CD4-positive, alpha-beta memory T cell (primary cell): ENCODE measurements at regions of chr2 and their contacts with region 1.

Region 1: DNA sequence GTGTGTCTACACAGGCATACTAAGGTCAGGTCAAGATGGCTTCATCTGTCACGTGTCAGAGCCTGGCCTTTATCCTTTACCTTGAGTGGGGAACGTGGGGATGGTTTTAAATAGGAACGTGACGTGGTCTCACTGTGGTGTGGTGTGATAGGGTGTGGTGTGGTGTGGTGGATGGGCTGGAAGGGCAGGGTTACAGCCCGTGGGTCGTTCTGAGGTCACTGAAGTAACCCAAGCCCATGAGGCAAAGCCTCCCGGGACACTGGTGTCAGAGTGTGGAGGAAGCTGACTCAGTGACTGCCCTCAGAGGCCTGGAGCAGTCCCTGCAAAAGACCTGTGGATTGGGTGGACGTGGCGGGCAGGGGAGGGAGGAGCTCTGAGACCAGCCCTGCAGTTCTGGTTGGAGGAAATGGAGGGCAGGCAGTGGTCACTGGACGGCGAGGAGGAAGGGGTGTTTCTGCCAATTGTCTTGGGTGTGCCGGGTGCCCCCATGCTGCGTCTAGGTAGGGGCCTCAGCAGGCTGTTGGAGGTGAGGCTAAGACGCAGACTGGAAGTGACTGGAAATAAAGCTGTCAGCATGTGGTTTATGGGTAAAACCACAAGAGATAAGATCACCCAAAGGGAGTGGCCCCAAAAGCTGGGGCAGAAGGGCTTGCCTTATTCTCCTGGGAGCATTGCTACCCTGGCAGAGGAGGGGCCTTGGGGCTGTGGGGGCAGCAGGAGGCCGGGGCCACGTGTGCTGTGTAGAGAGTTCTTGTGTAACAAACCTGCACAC is 84.8 kb downstream of the SH3RF3 start:
- DNase-seq: peak; percentile 83 to 89 (median 85)
- H3K4me3 ChIP-seq: peak overlapping the region in 1 of 2 donors; percentile 9
- H3K4me3 Mint-ChIP-seq: peak overlapping the region; percentile 23 to 80 (median 68)
- H3K27ac ChIP-seq: no peak overlapping the region
- H3K27ac Mint-ChIP-seq: peak overlapping the region; percentile 71 to 91 (median 81)
- H3K4me1 ChIP-seq: peaks cover 59% of the 10 kb centered on the region
- H3K4me1 Mint-ChIP-seq: peaks cover 49 to 75% (median 59%) of the 10 kb centered on the region in 4 donors
- H3K27me3 ChIP-seq: peaks cover 39% of the 10 kb centered on the region
- H3K27me3 Mint-ChIP-seq: peaks cover 61 to 80% of the 10 kb centered on the region in 2 donors

Region 2: GRCh38 chr2:108927936-108928659 is 285.7 kb before region 1 on chr2:
- CTCF ChIA-PET with region 1: no interaction called
- POLR2A ChIA-PET with region 1: no interaction called
- intact Hi-C with region 1: loop called (anchors 10 kb)
- DNase-seq: peak in 4 of 5 donors; percentile 41 to 52 (median 46)
- H3K4me3 ChIP-seq: no peak overlapping the region
- H3K4me3 Mint-ChIP-seq: no peak overlapping the region
- H3K27ac ChIP-seq: no peak overlapping the region
- H3K27ac Mint-ChIP-seq: peak overlapping the region in 1 of 7 donors; percentile 2
- H3K4me1 ChIP-seq: peaks cover 7% of the 10 kb centered on the region
- H3K4me1 Mint-ChIP-seq: peaks cover 4 to 14% (median 7%) of the 10 kb centered on the region in 4 donors
- H3K27me3 ChIP-seq: no peaks in the 10 kb centered on the region
- H3K27me3 Mint-ChIP-seq: no peaks in the 10 kb centered on the region

Region 3: GRCh38 chr2:109143214-109144187 is 70.3 kb before region 1 on chr2:
- CTCF ChIA-PET with region 1: no interaction called
- POLR2A ChIA-PET with region 1: no interaction called
- intact Hi-C with region 1: loop called (anchors 2 kb)
- DNase-seq: peak; percentile 73 to 87 (median 77)
- H3K4me3 ChIP-seq: peak overlapping the region in 1 of 2 donors; percentile 16
- H3K4me3 Mint-ChIP-seq: peak overlapping the region; percentile 29 to 85 (median 64)
- H3K27ac ChIP-seq: no peak overlapping the region
- H3K27ac Mint-ChIP-seq: peak overlapping the region; percentile 45 to 90 (median 75)
- H3K4me1 ChIP-seq: peaks cover 24% of the 10 kb centered on the region
- H3K4me1 Mint-ChIP-seq: peaks cover 10 to 35% (median 25%) of the 10 kb centered on the region in 4 donors
- H3K27me3 ChIP-seq: peaks cover 3% of the 10 kb centered on the region
- H3K27me3 Mint-ChIP-seq: peaks cover 19 to 21% of the 10 kb centered on the region in 2 donors